A673 (cell line): ENCODE measurements at regions of chr14 and their contacts with region 1.

Region 1: GRCh38 chr14:24013654-24014514 is 25.2 kb downstream of the DHRS4L2 start:
- DNase-seq: peak; percentile 84
- H3K4me3 ChIP-seq: no peak overlapping the region
- H3K27ac ChIP-seq: no peak overlapping the region
- H3K4me1 ChIP-seq: peaks cover 20% of the 10 kb centered on the region
- H3K27me3 ChIP-seq: no peaks in the 10 kb centered on the region
- CTCF ChIP-seq: peak; percentile 84

Region 2: GRCh38 chr14:23631702-23632460 is 382.0 kb before region 1 on chr14:
- CTCF ChIA-PET with region 1: no interaction called
- POLR2A ChIA-PET with region 1: no interaction called
- intact Hi-C with region 1: no loop called
- DNase-seq: peak; percentile 85
- H3K4me3 ChIP-seq: no peak overlapping the region
- H3K27ac ChIP-seq: no peak overlapping the region
- H3K4me1 ChIP-seq: no peaks in the 10 kb centered on the region
- H3K27me3 ChIP-seq: no peaks in the 10 kb centered on the region
- CTCF ChIP-seq: peak; percentile 95

Region 3: GRCh38 chr14:23953464-23954278 is 60.2 kb before region 1 on chr14 and contains the start of gene DHRS4:
- CTCF ChIA-PET with region 1: no interaction called
- POLR2A ChIA-PET with region 1: no interaction called
- intact Hi-C with region 1: loop called (anchors 10 kb)
- DNase-seq: peak; percentile 85
- H3K4me3 ChIP-seq: peak within 1 kb of the TSS; percentile 79
- H3K27ac ChIP-seq: peak within 1 kb of the TSS; percentile 80
- H3K4me1 ChIP-seq: peaks cover 7% of the 10 kb centered on the region
- H3K27me3 ChIP-seq: no peaks in the 10 kb centered on the region
- CTCF ChIP-seq: peak; percentile 96
- total RNA-seq, gene DHRS4: 10.1 and 11.4 TPM in 2 replicates

Region 4: GRCh38 chr14:24093901-24094761 is 80.2 kb after region 1 on chr14 and contains the start of gene PCK2:
- CTCF ChIA-PET with region 1: no interaction called
- POLR2A ChIA-PET with region 1: no interaction called
- intact Hi-C with region 1: loop called (anchors 1 kb)
- DNase-seq: peak; percentile 94
- H3K4me3 ChIP-seq: peak within 1 kb of the TSS; percentile 78
- H3K27ac ChIP-seq: peak within 1 kb of the TSS; percentile 94
- H3K4me1 ChIP-seq: peaks cover 12% of the 10 kb centered on the region
- H3K27me3 ChIP-seq: no peaks in the 10 kb centered on the region
- CTCF ChIP-seq: 0 out of 2 replicates have a peak, but pooled peaks have one; percentile 9
- total RNA-seq, gene PCK2: 16.8 and 46.3 TPM in 2 replicates

Region 5: GRCh38 chr14:24108336-24108874 is 94.5 kb after region 1 on chr14:
- CTCF ChIA-PET with region 1: no interaction called
- POLR2A ChIA-PET with region 1: no interaction called
- intact Hi-C with region 1: loop called (anchors 2 kb)
- DNase-seq: no peak
- H3K4me3 ChIP-seq: no peak overlapping the region
- H3K27ac ChIP-seq: no peak overlapping the region
- H3K4me1 ChIP-seq: peaks cover 2% of the 10 kb centered on the region
- H3K27me3 ChIP-seq: no peaks in the 10 kb centered on the region
- CTCF ChIP-seq: no peak

Region 6: GRCh38 chr14:24160850-24161804 is 147.2 kb after region 1 on chr14 and contains the start of gene IRF9:
- CTCF ChIA-PET with region 1: no interaction called
- POLR2A ChIA-PET with region 1: no interaction called
- intact Hi-C with region 1: loop called (anchors 1 kb)
- DNase-seq: peak; percentile 95
- H3K4me3 ChIP-seq: peak within 1 kb of the TSS; percentile 51
- H3K27ac ChIP-seq: peak within 1 kb of the TSS; percentile 75
- H3K4me1 ChIP-seq: peaks cover 8% of the 10 kb centered on the region
- H3K27me3 ChIP-seq: no peaks in the 10 kb centered on the region
- CTCF ChIP-seq: peak; percentile 99
- total RNA-seq, gene IRF9: 25.1 and 27.3 TPM in 2 replicates

Region 7: DNA sequence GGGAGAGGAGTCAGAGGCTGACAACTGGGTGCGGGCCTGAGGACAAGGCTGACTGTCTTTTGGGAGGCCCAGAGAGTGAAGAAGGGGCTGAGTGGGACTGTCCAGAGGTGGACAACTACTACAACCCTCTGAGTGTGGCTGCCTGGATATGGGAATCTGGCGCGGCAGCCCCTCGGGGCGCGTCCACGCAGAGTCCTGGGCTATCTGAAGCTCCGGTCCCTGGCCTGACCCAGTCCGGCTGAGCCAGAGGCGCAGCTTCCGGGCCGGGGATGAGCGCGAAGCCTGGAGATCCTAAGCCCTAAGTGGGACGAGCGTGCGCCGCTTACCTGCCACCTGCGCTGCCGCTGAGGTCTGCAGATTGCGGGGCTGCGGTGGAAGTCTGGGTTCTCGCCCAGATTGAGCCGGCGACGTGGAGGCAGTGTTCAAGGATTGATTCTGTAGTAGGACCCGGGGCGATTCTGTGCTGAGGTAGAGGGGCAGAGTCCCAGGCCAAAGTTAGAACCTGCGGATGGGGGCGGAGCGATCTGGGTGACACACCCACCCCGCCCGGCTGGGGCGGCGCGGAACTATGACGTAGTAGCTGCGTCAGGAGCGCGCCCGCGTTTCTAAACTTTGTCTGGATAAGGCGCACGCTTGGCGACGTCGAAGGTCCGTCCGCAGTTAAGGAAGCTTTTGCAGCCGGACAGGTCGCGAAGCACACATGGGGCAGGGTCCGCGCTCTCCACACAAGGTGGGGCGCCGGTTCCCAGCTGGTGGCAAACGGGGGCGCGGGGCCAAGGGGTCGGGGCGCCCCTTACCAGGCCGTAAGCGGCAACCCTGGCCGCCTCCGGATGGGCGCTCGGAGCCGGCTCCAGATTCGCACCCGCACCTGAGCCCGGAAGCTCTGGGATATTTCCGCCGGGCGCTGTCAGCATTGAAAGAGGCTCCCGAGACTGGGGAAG is 285.6 kb after region 1 on chr14 and contains the starts of genes DHRS1 and NOP9:
- CTCF ChIA-PET with region 1: no interaction called
- POLR2A ChIA-PET with region 1: no interaction called
- intact Hi-C with region 1: loop called (anchors 2 kb)
- DNase-seq: peak; percentile 90
- H3K4me3 ChIP-seq: peak within 1 kb of the TSS; percentile 92
- H3K27ac ChIP-seq: peak within 1 kb of the TSS; percentile 82
- H3K4me1 ChIP-seq: no peaks in the 10 kb centered on the region
- H3K27me3 ChIP-seq: no peaks in the 10 kb centered on the region
- CTCF ChIP-seq: no peak
- total RNA-seq, gene DHRS1: 13.3 and 14.5 TPM in 2 replicates
- total RNA-seq, gene NOP9: 34.0 and 37.1 TPM in 2 replicates

Region 8: DNA sequence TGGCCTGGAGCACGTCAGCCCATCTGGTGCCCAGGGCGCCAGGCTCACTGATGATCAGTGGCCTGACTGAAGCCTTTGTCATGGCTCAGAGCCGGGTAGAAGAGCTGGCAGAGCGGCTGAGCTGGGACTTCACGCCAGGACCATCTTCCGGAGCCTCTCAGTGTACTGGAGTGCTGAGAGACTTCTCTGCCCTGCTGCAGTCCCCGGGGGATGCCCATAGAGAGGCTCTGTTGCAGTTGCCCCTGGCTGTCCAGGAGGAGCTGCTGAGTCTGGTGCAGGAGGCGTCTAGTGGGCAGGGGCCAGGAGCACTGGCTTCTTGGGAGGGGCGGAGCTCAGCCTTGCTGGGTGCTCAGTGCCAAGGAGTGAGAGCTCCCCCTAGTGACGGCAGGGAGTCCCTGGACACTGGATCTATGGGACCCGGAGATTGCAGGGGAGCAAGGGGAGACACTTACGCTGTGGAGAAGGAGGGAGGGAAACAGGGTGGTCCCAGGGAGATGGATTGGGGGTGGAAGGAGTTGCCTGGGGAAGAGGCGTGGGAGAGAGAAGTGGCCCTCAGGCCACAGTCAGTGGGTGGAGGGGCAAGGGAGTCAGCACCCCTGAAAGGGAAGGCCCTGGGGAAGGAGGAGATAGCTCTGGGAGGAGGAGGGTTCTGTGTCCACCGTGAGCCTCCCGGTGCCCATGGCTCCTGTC is 417.8 kb after region 1 on chr14:
- CTCF ChIA-PET with region 1: no interaction called
- POLR2A ChIA-PET with region 1: no interaction called
- intact Hi-C with region 1: loop called (anchors 10 kb)
- DNase-seq: peak; percentile 94
- H3K4me3 ChIP-seq: peak overlapping the region; percentile 75
- H3K27ac ChIP-seq: peak overlapping the region; percentile 87
- H3K4me1 ChIP-seq: peaks cover 18% of the 10 kb centered on the region
- H3K27me3 ChIP-seq: no peaks in the 10 kb centered on the region
- CTCF ChIP-seq: peak; percentile 99